ENCODE measurements at regions of chr1 and their contacts with region 1.

Region 1: GRCh38 chr1:10679496-10680220 is 116.8 kb downstream of the CASZ1 start:
- DNase-seq: peak; percentile 91
- H3K4me3 ChIP-seq: no peak overlapping the region
- H3K27ac ChIP-seq: peak overlapping the region; percentile 11
- H3K4me1 ChIP-seq: peaks cover 34% of the 10 kb centered on the region
- H3K27me3 ChIP-seq: no peaks in the 10 kb centered on the region
- CTCF ChIP-seq: no peak

Region 2: GRCh38 chr1:10796019-10796944 is 116.6 kb after region 1 on chr1 and contains the start of gene CASZ1:
- CTCF ChIA-PET with region 1: no interaction called
- POLR2A ChIA-PET with region 1: no interaction called
- intact Hi-C with region 1: loop called (anchors 1 kb)
- DNase-seq: peak; percentile 95
- H3K4me3 ChIP-seq: peak within 1 kb of the TSS; percentile 68
- H3K27ac ChIP-seq: no peak within 1 kb of the TSS
- H3K4me1 ChIP-seq: peaks cover 28% of the 10 kb centered on the region
- H3K27me3 ChIP-seq: peaks cover 41% of the 10 kb centered on the region
- CTCF ChIP-seq: no peak
- total RNA-seq, gene CASZ1: 1.6 and 1.9 TPM in 2 replicates

Region 3: DNA sequence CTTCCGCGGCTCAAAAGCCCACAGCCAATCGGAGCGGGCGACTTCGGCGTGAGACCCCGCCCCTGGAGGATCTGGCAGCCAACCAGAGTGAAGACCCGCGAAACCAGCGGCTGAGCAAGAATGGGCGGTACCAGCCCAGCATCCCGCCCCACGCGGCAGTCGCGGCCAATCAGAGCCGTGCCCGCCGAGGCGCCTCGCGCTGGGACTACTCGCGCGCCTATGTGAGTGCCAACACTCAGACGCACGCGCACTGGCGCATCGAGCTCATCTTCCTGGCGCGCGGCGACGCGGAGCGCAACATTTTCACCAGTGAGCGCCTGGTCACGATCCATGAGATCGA is 821.9 kb after region 1 on chr1:
- CTCF ChIA-PET with region 1: no interaction called
- POLR2A ChIA-PET with region 1: no interaction called
- intact Hi-C with region 1: no loop called
- DNase-seq: no peak
- H3K4me3 ChIP-seq: no peak overlapping the region
- H3K27ac ChIP-seq: no peak overlapping the region
- H3K4me1 ChIP-seq: no peaks in the 10 kb centered on the region
- H3K27me3 ChIP-seq: peaks cover 31% of the 10 kb centered on the region
- CTCF ChIP-seq: no peak

Region 4: GRCh38 chr1:11918779-11919519 is 1239.3 kb after region 1 on chr1:
- CTCF ChIA-PET with region 1: no interaction called
- POLR2A ChIA-PET with region 1: interaction called, 16 read pairs
- intact Hi-C with region 1: no loop called
- DNase-seq: no peak
- H3K4me3 ChIP-seq: no peak overlapping the region
- H3K27ac ChIP-seq: no peak overlapping the region
- H3K4me1 ChIP-seq: no peaks in the 10 kb centered on the region
- H3K27me3 ChIP-seq: no peaks in the 10 kb centered on the region
- CTCF ChIP-seq: no peak